CD14-positive monocyte (primary cell): ENCODE measurements at regions of chr16 and their contacts with region 1.

Region 1: DNA sequence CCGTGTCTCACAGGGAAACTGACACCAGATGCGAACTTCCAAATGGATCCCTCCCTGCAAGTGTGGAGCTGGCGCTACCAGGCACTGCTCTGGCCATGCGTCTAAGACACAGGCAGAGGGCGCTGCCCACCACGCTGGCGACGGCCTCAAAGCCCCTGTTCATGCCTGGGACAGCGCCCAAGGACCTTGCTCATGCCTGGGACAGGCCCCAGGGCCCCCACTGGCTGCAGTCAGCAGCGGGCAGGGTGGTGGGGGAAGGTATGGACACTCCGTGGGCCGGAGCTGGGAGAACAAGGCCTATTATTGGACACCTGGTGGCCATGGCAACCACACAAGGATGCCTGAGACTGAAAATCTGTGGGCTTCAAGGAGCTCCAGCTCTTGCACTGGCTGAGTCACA is 8.8 kb downstream of the ZG16B start:
- DNase-seq: peak; percentile 42 to 65 (median 45)
- H3K4me3 ChIP-seq: no peak overlapping the region
- H3K4me3 Mint-ChIP-seq: no peak overlapping the region
- H3K27ac ChIP-seq: no peak overlapping the region
- H3K27ac Mint-ChIP-seq: no peak overlapping the region
- H3K4me1 ChIP-seq: peaks cover 13% of the 10 kb centered on the region in 2 donors
- H3K4me1 Mint-ChIP-seq: peaks cover 14% of the 10 kb centered on the region
- H3K27me3 ChIP-seq: no peaks in the 10 kb centered on the region
- H3K27me3 Mint-ChIP-seq: peaks cover 10 to 14% (median 12%) of the 10 kb centered on the region in 3 donors
- CTCF ChIP-seq: peak; percentile 79

Region 2: GRCh38 chr16:2867987-2868789 is 29.3 kb after region 1 on chr16:
- intact Hi-C with region 1: loop called (anchors 1 to 5 kb)
- DNase-seq: peak; percentile 89 to 97 (median 95)
- H3K4me3 ChIP-seq: peak overlapping the region; percentile 39 to 77 (median 64)
- H3K4me3 Mint-ChIP-seq: peak overlapping the region; percentile 89 to 93
- H3K27ac ChIP-seq: peak overlapping the region; percentile 88 to 90
- H3K27ac Mint-ChIP-seq: peak overlapping the region; percentile 95 to 96 (median 96)
- H3K4me1 ChIP-seq: peaks cover 15% of the 10 kb centered on the region in 2 donors
- H3K4me1 Mint-ChIP-seq: peaks cover 11% of the 10 kb centered on the region
- H3K27me3 ChIP-seq: no peaks in the 10 kb centered on the region
- H3K27me3 Mint-ChIP-seq: peaks cover 5 to 8% (median 6%) of the 10 kb centered on the region in 3 donors
- CTCF ChIP-seq: peak; percentile 98

Region 3: GRCh38 chr16:2874912-2875362 is 36.0 kb after region 1 on chr16:
- intact Hi-C with region 1: loop called in 1 of 2 experiments (anchors 5 kb)
- DNase-seq: peak; percentile 74 to 83 (median 76)
- H3K4me3 ChIP-seq: no peak overlapping the region
- H3K4me3 Mint-ChIP-seq: no peak overlapping the region
- H3K27ac ChIP-seq: no peak overlapping the region
- H3K27ac Mint-ChIP-seq: peak overlapping the region in 1 of 7 donors; percentile 31
- H3K4me1 ChIP-seq: peaks cover 8 to 10% of the 10 kb centered on the region in 2 donors
- H3K4me1 Mint-ChIP-seq: peaks cover 11% of the 10 kb centered on the region
- H3K27me3 ChIP-seq: no peaks in the 10 kb centered on the region
- H3K27me3 Mint-ChIP-seq: peaks cover 11 to 12% (median 11%) of the 10 kb centered on the region in 3 donors
- CTCF ChIP-seq: peak; percentile 92

Region 4: GRCh38 chr16:2919511-2920255 is 80.8 kb after region 1 on chr16:
- intact Hi-C with region 1: loop called in 1 of 2 experiments (anchors 5 kb)
- DNase-seq: peak; percentile 42 to 65 (median 61)
- H3K4me3 ChIP-seq: no peak overlapping the region
- H3K4me3 Mint-ChIP-seq: no peak overlapping the region
- H3K27ac ChIP-seq: no peak overlapping the region
- H3K27ac Mint-ChIP-seq: peak overlapping the region in 4 of 7 donors; percentile 35 to 82 (median 58)
- H3K4me1 ChIP-seq: peaks cover 9 to 15% of the 10 kb centered on the region in 2 donors
- H3K4me1 Mint-ChIP-seq: peaks cover 15% of the 10 kb centered on the region
- H3K27me3 ChIP-seq: no peaks in the 10 kb centered on the region
- H3K27me3 Mint-ChIP-seq: peaks cover 0 to 3% (median 0%) of the 10 kb centered on the region in 3 donors
- CTCF ChIP-seq: peak; percentile 91

Region 5: GRCh38 chr16:2926650-2927646 is 88.0 kb after region 1 on chr16:
- intact Hi-C with region 1: loop called (anchors 2 to 5 kb)
- DNase-seq: peak; percentile 86 to 92 (median 90)
- H3K4me3 ChIP-seq: peak overlapping the region in 1 of 3 experiments; percentile 31
- H3K4me3 Mint-ChIP-seq: no peak overlapping the region
- H3K27ac ChIP-seq: no peak overlapping the region
- H3K27ac Mint-ChIP-seq: peak overlapping the region in 3 of 7 donors; percentile 9 to 82 (median 43)
- H3K4me1 ChIP-seq: peaks cover 6 to 8% of the 10 kb centered on the region in 2 donors
- H3K4me1 Mint-ChIP-seq: peaks cover 8% of the 10 kb centered on the region
- H3K27me3 ChIP-seq: no peaks in the 10 kb centered on the region
- H3K27me3 Mint-ChIP-seq: no peaks in the 10 kb centered on the region
- CTCF ChIP-seq: peak; percentile 95